KBM-7 (cell line): ENCODE measurements at regions of chr10 and their contacts with region 1.

Region 1: GRCh38 chr10:70461215-70461986 is 17.2 kb upstream of the PALD1 start:
- DNase-seq: peak; percentile 51

Region 2: DNA sequence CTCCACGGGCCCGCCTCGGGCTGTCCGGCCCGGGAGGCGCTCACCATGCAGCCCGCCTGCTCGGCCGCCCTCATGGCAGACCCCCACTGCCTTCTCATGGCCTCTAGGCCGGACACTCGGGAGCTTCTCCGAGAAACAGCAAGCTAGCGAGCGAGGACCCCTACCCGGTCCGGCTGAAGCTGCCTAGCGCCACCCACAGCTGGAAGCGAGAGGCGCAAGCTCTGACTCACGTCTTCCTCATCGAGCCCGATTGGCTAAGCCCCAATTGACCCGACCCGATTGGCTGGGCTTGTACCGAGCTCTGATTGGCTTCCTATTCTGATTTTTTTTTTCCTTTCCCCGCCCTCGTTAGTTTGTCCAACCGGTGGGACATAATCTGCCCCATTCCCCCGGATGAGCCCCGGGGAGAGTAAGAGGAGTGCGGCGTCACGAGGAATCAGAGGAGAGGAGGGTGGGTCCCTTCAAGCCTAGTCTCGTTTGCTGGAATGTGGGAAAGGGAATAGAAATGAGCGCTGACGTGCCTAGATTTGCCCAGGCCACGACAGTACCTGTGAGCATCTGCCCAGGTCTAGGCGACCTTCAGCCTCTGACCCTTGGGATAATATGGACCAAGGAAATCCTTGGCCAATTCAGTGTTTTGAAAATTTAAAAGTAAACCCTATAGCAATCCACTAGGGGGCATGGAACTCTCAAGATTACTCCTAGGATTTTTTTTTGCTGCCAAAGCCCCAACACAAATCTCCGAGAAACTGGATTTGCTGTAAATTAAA is 314.7 kb before region 1 on chr10 and contains the start of gene TYSND1:
- in situ Hi-C with region 1: no loop called
- DNase-seq: peak; percentile 98

Region 3: DNA sequence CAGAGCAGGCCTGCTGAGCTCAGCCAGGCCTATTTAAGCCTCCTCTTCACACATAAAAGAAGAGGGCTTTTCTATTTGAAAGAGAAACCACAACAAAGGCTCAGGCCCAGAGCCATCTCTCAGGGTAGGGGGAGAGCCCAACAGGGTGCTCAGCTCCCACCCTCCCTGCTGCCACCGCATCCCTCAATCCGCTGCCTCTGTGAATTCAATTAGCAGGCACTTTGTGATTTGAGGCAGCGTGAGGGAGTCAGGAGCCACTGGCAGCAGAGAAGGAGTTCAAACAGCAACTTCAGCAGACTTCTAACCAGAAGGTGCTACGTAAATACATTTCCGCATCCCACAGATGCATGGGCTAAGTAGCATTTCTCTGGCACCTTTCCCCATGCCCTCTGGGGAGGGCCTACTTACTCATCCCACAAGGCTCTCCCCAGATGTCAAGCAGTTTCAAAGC is 124.2 kb before region 1 on chr10:
- in situ Hi-C with region 1: no loop called
- DNase-seq: no peak

Region 4: DNA sequence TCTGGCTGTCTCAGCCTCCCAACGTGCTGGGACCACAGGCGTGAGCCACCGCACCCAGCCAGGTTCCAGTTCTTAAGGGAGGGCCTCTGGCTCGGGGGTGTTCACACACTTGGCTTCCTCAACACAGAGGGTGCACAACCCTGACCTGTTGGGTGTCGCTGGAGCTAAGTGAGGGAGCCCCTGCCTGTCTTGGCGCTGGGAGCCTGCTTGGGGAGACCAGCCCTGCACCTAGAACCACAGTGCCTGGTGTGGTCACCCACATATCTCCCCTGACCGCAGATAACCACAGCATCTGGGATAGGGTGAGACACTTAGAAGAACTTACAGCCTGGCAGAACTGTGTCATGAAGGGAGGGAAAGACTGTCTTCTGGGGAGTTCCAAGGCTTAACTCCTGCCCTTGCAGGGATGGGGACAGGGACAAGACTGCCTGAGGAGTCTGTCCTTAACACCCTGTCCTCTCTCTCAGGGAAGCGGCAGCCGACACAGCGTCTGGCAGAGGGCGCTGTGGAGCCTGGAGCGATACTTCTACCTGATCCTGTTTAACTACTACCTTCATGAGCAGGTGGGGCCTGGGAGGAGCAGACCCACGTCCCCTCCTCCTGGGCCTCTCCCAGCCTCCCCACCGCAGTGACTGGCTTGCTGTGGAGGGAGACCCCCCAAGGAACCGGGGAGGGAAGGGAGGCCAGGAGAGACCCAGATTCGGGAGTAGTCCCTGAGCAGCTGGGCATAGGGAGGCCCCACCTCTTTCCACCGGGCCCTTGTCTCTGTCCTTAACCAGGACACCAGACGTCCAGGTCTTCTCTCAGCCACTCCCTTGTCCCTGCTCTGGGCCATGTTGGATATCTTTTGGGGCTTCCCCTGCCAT is 76.2 kb after region 1 on chr10:
- in situ Hi-C with region 1: loop called (anchors 10 kb)
- DNase-seq: peak; percentile 46